GM12878 (cell line): ENCODE measurements at regions of chr20 and their contacts with region 1.

Region 1: DNA sequence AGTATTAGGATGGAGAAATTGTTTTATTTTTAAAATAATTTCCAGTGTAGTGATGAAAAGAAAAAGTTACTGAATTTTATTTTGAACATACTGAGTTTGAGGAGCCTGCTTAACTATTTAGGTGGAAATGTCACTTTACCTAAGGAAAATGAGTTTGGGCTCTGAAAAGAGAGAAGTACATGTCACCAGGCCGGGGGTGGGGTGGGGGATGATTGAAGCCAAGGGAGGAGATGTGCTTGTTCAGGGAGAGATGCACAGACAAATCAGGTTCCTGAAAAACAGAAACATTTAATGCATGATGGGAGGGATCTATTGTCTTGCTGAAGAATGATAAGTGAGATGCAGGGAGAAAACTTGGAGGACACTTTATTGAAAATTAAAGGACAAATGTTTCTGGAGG is 71.3 kb downstream of the PLCB1 start:
- DNase-seq: no peak
- ATAC-seq: no peak
- H3K4me3 ChIP-seq: no peak overlapping the region
- H3K27ac ChIP-seq: no peak overlapping the region
- H3K4me1 ChIP-seq: no peaks in the 10 kb centered on the region
- H3K27me3 ChIP-seq: no peaks in the 10 kb centered on the region
- CTCF ChIP-seq: no peak
- EP300 ChIP-seq: no peak
- POLR2A ChIP-seq: no peak
- RAD21 ChIP-seq: no peak

Region 2: DNA sequence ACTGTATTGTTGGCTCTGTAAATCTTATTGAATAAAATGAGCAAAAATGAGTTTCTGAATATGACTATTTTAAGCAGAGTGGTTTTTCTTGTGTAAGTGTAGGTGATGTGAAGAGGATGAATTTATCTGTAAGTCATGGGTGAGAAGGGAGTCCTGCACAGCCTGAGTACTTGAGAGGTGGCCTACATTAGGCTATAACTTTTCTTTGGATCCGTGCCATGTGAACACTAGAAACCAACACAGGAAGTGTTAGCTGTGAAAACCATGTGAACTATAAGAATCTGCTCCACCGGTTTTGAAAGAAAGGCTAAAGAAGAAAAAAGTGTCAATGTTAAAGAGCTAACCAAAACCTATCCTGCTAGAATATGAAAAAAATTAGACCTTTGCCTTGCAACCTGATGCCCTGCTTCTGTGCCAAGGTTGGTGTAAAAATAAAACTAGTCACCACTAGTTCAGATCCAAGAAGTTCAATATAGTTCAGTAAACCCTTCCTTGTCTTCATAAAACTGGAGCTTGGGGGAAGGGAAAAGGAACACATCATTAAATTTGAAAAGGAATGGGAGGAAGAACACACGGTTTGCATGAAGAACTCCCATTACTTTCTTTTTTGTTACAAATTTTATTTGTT is 50.0 kb before region 1 on chr20:
- CTCF ChIA-PET with region 1: no interaction called
- POLR2A ChIA-PET with region 1: no interaction called
- RAD21 ChIA-PET with region 1: no interaction called
- SMC1A ChIA-PET with region 1: interaction called, 3 read pairs
- in situ Hi-C with region 1: no loop called
- intact Hi-C with region 1: loop called (anchors 5 kb)
- DNase-seq: peak; percentile 51
- ATAC-seq: peak; percentile 52
- H3K4me3 ChIP-seq: no peak overlapping the region
- H3K27ac ChIP-seq: no peak overlapping the region
- H3K4me1 ChIP-seq: no peaks in the 10 kb centered on the region
- H3K27me3 ChIP-seq: no peaks in the 10 kb centered on the region; a peak in 1 of 4 replicates
- CTCF ChIP-seq: no peak
- EP300 ChIP-seq: no peak
- POLR2A ChIP-seq: no peak
- RAD21 ChIP-seq: no peak

Region 3: DNA sequence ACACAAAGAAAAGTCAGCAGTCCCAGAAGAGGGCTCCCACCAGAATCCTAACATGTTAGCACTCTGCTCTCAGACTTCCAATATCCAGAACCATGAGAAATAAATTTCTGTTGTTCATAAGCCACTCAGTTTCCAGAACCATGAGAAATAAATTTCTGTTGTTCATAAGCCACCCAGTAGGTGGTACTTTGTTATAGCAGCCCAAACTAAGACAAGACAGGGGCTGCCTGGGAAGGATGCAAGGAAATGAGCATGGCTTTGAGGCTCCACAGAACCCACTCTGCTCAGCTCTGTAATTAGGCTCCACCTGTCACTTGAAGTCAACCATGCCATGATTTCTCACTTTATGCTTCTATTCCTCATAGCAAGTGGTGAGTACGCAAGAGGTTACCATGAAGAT is 772.9 kb after region 1 on chr20:
- CTCF ChIA-PET with region 1: no interaction called
- POLR2A ChIA-PET with region 1: no interaction called
- RAD21 ChIA-PET with region 1: no interaction called
- SMC1A ChIA-PET with region 1: no interaction called
- in situ Hi-C with region 1: no loop called
- intact Hi-C with region 1: no loop called
- DNase-seq: no peak
- ATAC-seq: no peak
- H3K4me3 ChIP-seq: no peak overlapping the region
- H3K27ac ChIP-seq: no peak overlapping the region
- H3K4me1 ChIP-seq: no peaks in the 10 kb centered on the region
- H3K27me3 ChIP-seq: no peaks in the 10 kb centered on the region
- CTCF ChIP-seq: no peak
- EP300 ChIP-seq: no peak
- POLR2A ChIP-seq: no peak
- RAD21 ChIP-seq: no peak